Activated CD4-positive, alpha-beta T cell treated with anti-CD3 and anti-CD28 coated beads for 36 hours (primary cell): ENCODE measurements at regions of chr2 and their contacts with region 1.

Region 1: DNA sequence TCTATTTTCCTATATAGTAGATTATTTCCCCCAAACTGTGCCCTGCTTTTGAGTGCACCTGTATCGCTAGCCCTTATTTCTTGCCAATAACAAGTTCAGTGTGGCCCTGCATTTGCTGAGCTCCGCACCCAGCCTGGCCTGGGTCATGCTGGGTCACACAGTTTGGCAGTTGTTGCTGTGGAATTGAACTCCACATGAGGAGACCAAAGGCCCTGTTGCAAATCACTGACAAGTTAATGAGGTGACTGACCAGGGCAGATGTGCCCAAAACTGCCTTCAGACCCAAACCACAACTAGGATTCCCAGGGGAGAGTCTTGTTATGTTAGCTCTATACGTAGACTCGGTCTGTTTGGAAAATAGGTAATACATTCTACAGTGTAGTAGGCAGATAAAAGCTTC is 31.0 kb downstream of the COL4A4 start:
- DNase-seq: no peak
- ATAC-seq: no peak
- H3K4me3 Mint-ChIP-seq: no peak overlapping the region
- H3K27ac Mint-ChIP-seq: no peak overlapping the region
- H3K4me1 Mint-ChIP-seq: no peaks in the 10 kb centered on the region
- H3K27me3 Mint-ChIP-seq: peaks cover 7% of the 10 kb centered on the region

Region 2: GRCh38 chr2:227052879-227053278 is 80.1 kb before region 1 on chr2:
- CTCF ChIA-PET with region 1: no interaction called
- POLR2A ChIA-PET with region 1: no interaction called
- intact Hi-C with region 1: no loop called
- DNase-seq: no peak
- ATAC-seq: no peak
- H3K4me3 Mint-ChIP-seq: no peak overlapping the region
- H3K27ac Mint-ChIP-seq: no peak overlapping the region
- H3K4me1 Mint-ChIP-seq: no peaks in the 10 kb centered on the region
- H3K27me3 Mint-ChIP-seq: peaks cover 3% of the 10 kb centered on the region

Region 3: GRCh38 chr2:227884511-227884947 is 751.5 kb after region 1 on chr2:
- CTCF ChIA-PET with region 1: no interaction called
- POLR2A ChIA-PET with region 1: no interaction called
- intact Hi-C with region 1: loop called in 1 of 2 experiments (anchors 1 kb)
- DNase-seq: peak; percentile 80
- ATAC-seq: peak; percentile 81
- H3K4me3 Mint-ChIP-seq: no peak overlapping the region
- H3K27ac Mint-ChIP-seq: no peak overlapping the region
- H3K4me1 Mint-ChIP-seq: no peaks in the 10 kb centered on the region
- H3K27me3 Mint-ChIP-seq: peaks cover 8% of the 10 kb centered on the region